Stomach (tissue), 19 donors: ENCODE measurements at regions of chr22 and their contacts with region 1.

Region 1: DNA sequence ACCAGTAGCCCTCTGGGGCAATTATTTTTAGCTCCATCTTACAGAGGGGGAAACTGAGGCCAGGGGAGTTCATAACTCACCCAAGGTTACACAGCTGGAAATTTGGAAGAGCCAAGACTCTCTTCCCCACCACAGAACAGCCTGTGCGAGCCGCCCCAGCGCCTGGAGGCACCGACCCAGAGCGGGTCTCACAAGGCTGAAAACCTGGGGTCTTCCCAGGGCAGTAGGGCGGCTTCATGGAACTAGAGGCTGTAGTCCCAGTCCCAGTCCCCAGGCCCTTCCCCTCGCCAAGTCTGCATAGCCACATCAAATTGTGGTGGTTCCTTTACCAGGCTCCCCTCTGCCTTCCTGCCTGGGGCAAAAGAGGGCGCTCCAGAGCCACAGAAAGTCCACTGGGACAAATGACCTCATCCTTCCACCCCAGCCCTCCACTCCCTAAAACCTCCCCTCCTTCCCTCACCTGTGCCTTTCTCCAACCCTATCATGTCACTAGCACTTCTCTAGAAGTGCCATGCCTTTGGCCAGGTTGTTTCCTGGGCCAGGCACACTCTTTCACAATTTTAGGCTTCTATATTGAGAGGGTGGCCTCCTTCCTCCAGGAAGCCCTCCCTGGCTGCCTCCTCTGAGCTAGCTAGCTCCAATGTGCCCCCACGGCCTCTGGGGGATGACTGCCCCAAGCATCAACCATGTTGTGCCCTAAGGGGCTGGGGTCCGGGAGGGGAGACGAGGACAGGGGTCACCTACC is 15.2 kb upstream of the CDC42EP1 start:
- DNase-seq: peak; percentile 90 to 91
- H3K4me3 ChIP-seq: peak overlapping the region; percentile 19 to 37 (median 32)
- H3K27ac ChIP-seq: peak overlapping the region; percentile 93 to 98 (median 95)
- H3K4me1 ChIP-seq: peaks cover 42 to 86% (median 64%) of the 10 kb centered on the region in 4 donors
- H3K27me3 ChIP-seq: no peaks in the 10 kb centered on the region
- CTCF ChIP-seq: peak in 5 of 7 experiments; percentile 60 to 88 (median 73)
- EP300 ChIP-seq: no peak
- POLR2A ChIP-seq: no peak

Region 2: GRCh38 chr22:37599153-37599552 is 54.0 kb after region 1 on chr22:
- intact Hi-C with region 1: loop called (anchors 10 kb)
- DNase-seq: no peak
- H3K4me3 ChIP-seq: no peak overlapping the region
- H3K27ac ChIP-seq: no peak overlapping the region
- H3K4me1 ChIP-seq: peaks cover 0 to 23% (median 0%) of the 10 kb centered on the region in 4 donors
- H3K27me3 ChIP-seq: no peaks in the 10 kb centered on the region
- CTCF ChIP-seq: no peak
- EP300 ChIP-seq: no peak
- POLR2A ChIP-seq: no peak

Region 3: GRCh38 chr22:37623075-37624016 is 78.2 kb after region 1 on chr22:
- intact Hi-C with region 1: no loop called
- DNase-seq: peak; percentile 73 to 88
- H3K4me3 ChIP-seq: no peak overlapping the region
- H3K27ac ChIP-seq: peak overlapping the region in 4 of 5 donors; percentile 20 to 84 (median 50)
- H3K4me1 ChIP-seq: peaks cover 23 to 47% (median 43%) of the 10 kb centered on the region in 4 donors
- H3K27me3 ChIP-seq: no peaks in the 10 kb centered on the region
- CTCF ChIP-seq: peak in 5 of 7 experiments; percentile 49 to 95 (median 87)
- EP300 ChIP-seq: no peak
- POLR2A ChIP-seq: no peak